Breast epithelium (tissue), 4 donors: ENCODE measurements at regions of chr18 and their contacts with region 1.

Region 1: GRCh38 chr18:22559414-22560274 is 141.9 kb upstream of the CTAGE1 start:
- DNase-seq: peak in 1 of 2 donors; percentile 55
- H3K4me3 ChIP-seq: peak overlapping the region; percentile 50 to 81 (median 50)
- H3K27ac ChIP-seq: peak overlapping the region; percentile 58 to 76
- H3K4me1 ChIP-seq: peaks cover 0 to 5% of the 10 kb centered on the region in 2 donors
- H3K27me3 ChIP-seq: no peaks in the 10 kb centered on the region
- CTCF ChIP-seq: peak in 2 of 3 donors; percentile 22 to 38
- POLR2A ChIP-seq: no peak

Region 2: GRCh38 chr18:21955757-21956652 is 603.6 kb before region 1 on chr18:
- intact Hi-C with region 1: no loop called
- DNase-seq: peak; percentile 40 to 74
- H3K4me3 ChIP-seq: no peak overlapping the region
- H3K27ac ChIP-seq: no peak overlapping the region
- H3K4me1 ChIP-seq: no peaks in the 10 kb centered on the region
- H3K27me3 ChIP-seq: no peaks in the 10 kb centered on the region
- CTCF ChIP-seq: peak; percentile 65 to 75 (median 66)
- POLR2A ChIP-seq: no peak

Region 3: DNA sequence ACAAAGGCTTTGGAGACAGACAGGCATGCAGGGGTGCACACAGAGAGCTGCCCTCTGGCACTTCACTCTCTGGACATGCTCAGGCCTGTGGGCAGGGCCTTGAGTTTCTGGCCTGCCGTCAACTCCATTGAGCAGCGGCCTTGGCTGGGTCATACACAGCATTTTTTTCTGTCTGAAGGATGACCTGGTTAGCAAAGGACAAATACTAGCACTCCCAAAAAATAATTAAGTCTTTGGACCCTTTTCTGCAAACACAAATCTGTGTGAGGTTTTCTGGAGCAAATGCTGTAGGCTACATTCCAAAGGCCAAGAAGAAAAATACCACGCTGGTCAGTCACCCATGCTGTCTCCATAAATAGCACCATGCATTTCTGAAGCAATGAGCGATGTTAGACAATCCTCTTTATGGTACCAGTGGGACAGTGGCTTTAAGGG is 17.2 kb before region 1 on chr18:
- intact Hi-C with region 1: no loop called
- DNase-seq: no peak
- H3K4me3 ChIP-seq: no peak overlapping the region
- H3K27ac ChIP-seq: peak overlapping the region; percentile 36 to 46
- H3K4me1 ChIP-seq: peaks cover 0 to 7% of the 10 kb centered on the region in 2 donors
- H3K27me3 ChIP-seq: no peaks in the 10 kb centered on the region
- CTCF ChIP-seq: no peak
- POLR2A ChIP-seq: no peak

Region 4: GRCh38 chr18:22585821-22586220 is 26.2 kb after region 1 on chr18:
- intact Hi-C with region 1: no loop called
- DNase-seq: no peak
- H3K4me3 ChIP-seq: no peak overlapping the region
- H3K27ac ChIP-seq: no peak overlapping the region
- H3K4me1 ChIP-seq: no peaks in the 10 kb centered on the region
- H3K27me3 ChIP-seq: no peaks in the 10 kb centered on the region
- CTCF ChIP-seq: no peak
- POLR2A ChIP-seq: no peak

Region 5: DNA sequence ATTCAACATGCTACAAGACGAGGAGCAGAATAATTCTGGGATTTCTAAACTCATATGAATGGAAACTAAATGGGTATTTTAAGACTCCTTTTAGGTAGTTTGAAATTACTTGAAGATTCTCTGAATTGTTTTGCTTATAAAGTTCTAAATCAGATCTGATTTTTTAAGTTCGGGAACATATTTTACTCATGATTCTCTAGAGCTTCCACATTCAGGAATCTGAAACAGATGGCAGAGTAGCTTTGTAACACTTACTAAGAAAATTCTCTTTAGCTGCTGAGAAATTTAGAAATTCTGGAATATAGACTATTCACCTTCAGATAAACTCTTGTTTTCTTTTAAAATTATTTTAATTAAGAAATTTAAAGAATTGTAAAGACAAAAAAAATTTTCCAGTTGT is 387.2 kb after region 1 on chr18:
- intact Hi-C with region 1: loop called (anchors 10 kb)
- DNase-seq: no peak
- H3K4me3 ChIP-seq: no peak overlapping the region
- H3K27ac ChIP-seq: no peak overlapping the region
- H3K4me1 ChIP-seq: peaks cover 0 to 8% of the 10 kb centered on the region in 2 donors
- H3K27me3 ChIP-seq: no peaks in the 10 kb centered on the region
- CTCF ChIP-seq: no peak
- POLR2A ChIP-seq: no peak

Region 6: GRCh38 chr18:23958036-23958435 is 1398.4 kb after region 1 on chr18:
- intact Hi-C with region 1: no loop called
- DNase-seq: peak; percentile 60 to 68
- H3K4me3 ChIP-seq: no peak overlapping the region
- H3K27ac ChIP-seq: peak overlapping the region in 1 of 2 donors; percentile 15
- H3K4me1 ChIP-seq: no peaks in the 10 kb centered on the region
- H3K27me3 ChIP-seq: no peaks in the 10 kb centered on the region
- CTCF ChIP-seq: no peak
- POLR2A ChIP-seq: no peak